Dendritic cell treated with granulocyte-macrophage colony-stimulating factor and Interleukin-4, amounts not matched to agents 40 ng/mL and 50 ng/mL, for 4 days (primary cell): ENCODE measurements at regions of chr11 and their contacts with region 1.

Region 1: GRCh38 chr11:32792948-32793475 is 1.4 kb downstream of the CCDC73 start:
- H3K4me3 Mint-ChIP-seq: no peak overlapping the region
- H3K27ac Mint-ChIP-seq: no peak overlapping the region
- H3K4me1 Mint-ChIP-seq: no peaks in the 10 kb centered on the region
- H3K27me3 Mint-ChIP-seq: no peaks in the 10 kb centered on the region

Region 2: GRCh38 chr11:32326522-32326921 is 466.5 kb before region 1 on chr11:
- intact Hi-C with region 1: loop called (anchors 10 kb)
- H3K4me3 Mint-ChIP-seq: no peak overlapping the region
- H3K27ac Mint-ChIP-seq: no peak overlapping the region
- H3K4me1 Mint-ChIP-seq: peaks cover 5% of the 10 kb centered on the region
- H3K27me3 Mint-ChIP-seq: peaks cover 9% of the 10 kb centered on the region

Region 3: DNA sequence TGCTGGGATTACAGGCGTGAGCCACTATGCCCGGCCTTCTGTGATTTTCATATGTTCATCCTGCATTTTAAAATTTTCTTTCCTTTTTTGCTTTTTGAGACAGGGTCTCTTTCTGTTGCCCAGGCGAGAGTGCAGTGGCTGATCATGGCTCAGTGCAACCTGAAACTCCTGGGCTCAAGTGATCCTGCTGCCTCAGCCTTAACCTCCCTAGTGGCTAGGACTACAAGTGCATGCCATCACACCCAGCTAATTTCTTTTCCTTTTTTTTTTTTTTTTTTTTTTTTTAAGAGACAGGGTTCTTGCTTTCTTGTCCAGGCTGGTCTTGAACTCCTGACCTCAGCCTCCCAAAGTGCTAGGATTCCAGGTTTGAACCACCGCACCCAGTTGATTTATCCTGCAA is 303.5 kb before region 1 on chr11:
- intact Hi-C with region 1: no loop called
- H3K4me3 Mint-ChIP-seq: no peak overlapping the region
- H3K27ac Mint-ChIP-seq: no peak overlapping the region
- H3K4me1 Mint-ChIP-seq: no peaks in the 10 kb centered on the region
- H3K27me3 Mint-ChIP-seq: no peaks in the 10 kb centered on the region

Region 4: GRCh38 chr11:32713496-32713895 is 79.5 kb before region 1 on chr11:
- intact Hi-C with region 1: loop called (anchors 1 kb)
- H3K4me3 Mint-ChIP-seq: no peak overlapping the region
- H3K27ac Mint-ChIP-seq: no peak overlapping the region
- H3K4me1 Mint-ChIP-seq: no peaks in the 10 kb centered on the region
- H3K27me3 Mint-ChIP-seq: no peaks in the 10 kb centered on the region

Region 5: DNA sequence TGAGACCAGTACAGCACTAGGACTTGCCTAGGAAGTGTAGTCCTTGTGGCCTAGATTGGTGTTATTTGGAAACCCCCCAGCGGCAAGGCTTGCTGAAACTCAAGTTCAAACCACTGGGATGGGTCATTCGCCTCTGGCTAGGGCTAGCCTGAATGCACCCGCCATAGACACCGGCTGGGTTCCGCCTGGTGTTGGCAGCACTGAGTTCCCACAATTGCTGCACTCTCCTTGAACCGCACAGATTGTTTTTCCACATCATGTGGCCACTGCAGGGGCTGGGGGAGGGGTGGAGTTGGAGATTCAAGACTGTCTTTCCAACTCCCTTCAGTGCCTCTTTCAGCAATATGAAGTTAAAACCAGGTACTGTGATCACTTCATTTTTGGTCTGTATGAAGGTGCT is 41.6 kb before region 1 on chr11:
- intact Hi-C with region 1: loop called (anchors 1 kb)
- H3K4me3 Mint-ChIP-seq: no peak overlapping the region
- H3K27ac Mint-ChIP-seq: no peak overlapping the region
- H3K4me1 Mint-ChIP-seq: no peaks in the 10 kb centered on the region
- H3K27me3 Mint-ChIP-seq: peaks cover 3% of the 10 kb centered on the region